Pancreas (tissue), 10 donors: ENCODE measurements at regions of chr4 and their contacts with region 1.

Region 1: GRCh38 chr4:139295206-139295941 is 5.9 kb upstream of the NAA15 start:
- DNase-seq: peak; percentile 92 to 100 (median 97)
- ATAC-seq: peak; percentile 96 to 99 (median 97)
- H3K4me3 ChIP-seq: peak overlapping the region; percentile 73 to 81 (median 79)
- H3K27ac ChIP-seq: peak overlapping the region; percentile 67 to 89 (median 78)
- H3K4me1 ChIP-seq: peaks cover 11 to 17% (median 15%) of the 10 kb centered on the region in 3 donors
- H3K27me3 ChIP-seq: no peaks in the 10 kb centered on the region
- CTCF ChIP-seq: peak; percentile 91 to 97 (median 96)

Region 2: DNA sequence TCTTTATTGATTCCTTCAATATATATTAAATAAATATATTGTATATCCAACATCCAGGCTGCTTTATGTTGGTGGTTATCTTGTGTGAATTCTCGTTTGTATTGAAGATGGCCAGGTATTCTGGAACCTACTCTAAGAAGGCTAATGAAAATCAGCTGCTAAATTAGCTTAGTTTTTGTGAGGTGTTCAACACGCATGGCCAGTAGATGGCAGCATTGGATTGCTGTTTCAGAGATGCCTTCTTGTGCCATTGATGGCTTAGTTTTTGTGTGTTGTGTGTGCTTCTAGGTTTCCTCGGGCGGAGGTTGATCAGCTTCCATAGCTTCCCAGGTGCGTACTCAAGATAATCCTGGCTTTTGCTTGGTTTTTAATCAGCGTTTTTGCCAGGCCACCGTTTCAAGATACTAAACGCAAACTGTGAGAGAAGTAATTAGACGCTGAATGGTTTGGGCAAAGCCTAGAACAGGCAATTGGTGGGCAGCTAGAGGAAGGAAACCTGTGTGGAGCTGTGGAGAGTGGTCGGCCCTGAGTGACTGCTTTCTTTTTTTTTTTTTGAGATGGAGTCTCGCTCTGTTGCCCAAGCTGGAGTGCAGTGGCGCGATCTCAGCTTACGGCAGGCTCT is 264.6 kb before region 1 on chr4:
- intact Hi-C with region 1: loop called in 1 of 3 experiments (anchors 10 kb)
- DNase-seq: peak in 4 of 6 donors; percentile 56 to 78 (median 66)
- ATAC-seq: peak; percentile 39 to 83 (median 76)
- H3K4me3 ChIP-seq: no peak overlapping the region
- H3K27ac ChIP-seq: no peak overlapping the region
- H3K4me1 ChIP-seq: peaks cover 9 to 11% (median 9%) of the 10 kb centered on the region in 3 donors
- H3K27me3 ChIP-seq: no peaks in the 10 kb centered on the region
- CTCF ChIP-seq: peak; percentile 56 to 70 (median 61)

Region 3: GRCh38 chr4:139099366-139099982 is 195.9 kb before region 1 on chr4:
- intact Hi-C with region 1: loop called in 1 of 3 experiments (anchors 10 kb)
- DNase-seq: peak in 5 of 6 donors; percentile 55 to 79 (median 59)
- ATAC-seq: peak; percentile 85 to 96 (median 92)
- H3K4me3 ChIP-seq: no peak overlapping the region
- H3K27ac ChIP-seq: no peak overlapping the region
- H3K4me1 ChIP-seq: no peaks in the 10 kb centered on the region
- H3K27me3 ChIP-seq: no peaks in the 10 kb centered on the region
- CTCF ChIP-seq: peak; percentile 76 to 89 (median 80)

Region 4: GRCh38 chr4:139501927-139502899 is 206.8 kb after region 1 on chr4:
- intact Hi-C with region 1: no loop called
- DNase-seq: no peak
- ATAC-seq: no peak
- H3K4me3 ChIP-seq: no peak overlapping the region
- H3K27ac ChIP-seq: no peak overlapping the region
- H3K4me1 ChIP-seq: peaks cover under 1 to 2% (median 1%) of the 10 kb centered on the region in 3 donors
- H3K27me3 ChIP-seq: no peaks in the 10 kb centered on the region
- CTCF ChIP-seq: no peak